Activated B cell treated with CpG ODN at 0.5 μM for 24 hours (primary cell): ENCODE measurements at regions of chr2 and their contacts with region 1.

Region 1: DNA sequence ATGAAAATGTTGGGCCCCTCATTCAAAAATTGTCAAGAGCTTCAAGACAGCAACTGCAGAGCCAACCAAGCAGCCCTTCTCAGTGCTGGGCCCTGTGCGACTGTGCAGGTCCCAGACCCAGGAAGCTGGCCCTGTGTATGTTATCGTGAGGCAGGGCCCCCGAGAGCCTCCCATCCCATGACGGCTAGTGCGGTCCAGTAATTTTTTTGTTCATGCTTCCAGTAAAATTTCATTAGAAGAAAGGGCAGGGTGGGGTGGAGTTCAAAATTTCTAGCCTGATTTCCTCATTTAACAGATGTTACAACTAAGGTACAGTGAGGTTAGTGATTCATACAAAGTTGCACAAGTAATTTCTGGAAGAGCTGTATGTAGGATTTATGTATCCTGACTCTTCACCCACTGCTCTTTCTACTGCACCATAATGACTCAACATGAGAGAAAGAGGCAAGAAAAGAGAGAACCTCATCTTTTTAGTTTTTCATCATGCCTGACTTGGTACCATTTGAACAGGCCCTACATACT is 105.5 kb downstream of the ZEB2 start:
- DNase-seq: no peak
- ATAC-seq: peak; percentile 71
- H3K4me3 Mint-ChIP-seq: no peak overlapping the region
- H3K27ac Mint-ChIP-seq: peak overlapping the region; percentile 36
- H3K4me1 Mint-ChIP-seq: peaks cover 21% of the 10 kb centered on the region
- H3K27me3 Mint-ChIP-seq: no peaks in the 10 kb centered on the region
- CTCF ChIP-seq: no peak

Region 2: DNA sequence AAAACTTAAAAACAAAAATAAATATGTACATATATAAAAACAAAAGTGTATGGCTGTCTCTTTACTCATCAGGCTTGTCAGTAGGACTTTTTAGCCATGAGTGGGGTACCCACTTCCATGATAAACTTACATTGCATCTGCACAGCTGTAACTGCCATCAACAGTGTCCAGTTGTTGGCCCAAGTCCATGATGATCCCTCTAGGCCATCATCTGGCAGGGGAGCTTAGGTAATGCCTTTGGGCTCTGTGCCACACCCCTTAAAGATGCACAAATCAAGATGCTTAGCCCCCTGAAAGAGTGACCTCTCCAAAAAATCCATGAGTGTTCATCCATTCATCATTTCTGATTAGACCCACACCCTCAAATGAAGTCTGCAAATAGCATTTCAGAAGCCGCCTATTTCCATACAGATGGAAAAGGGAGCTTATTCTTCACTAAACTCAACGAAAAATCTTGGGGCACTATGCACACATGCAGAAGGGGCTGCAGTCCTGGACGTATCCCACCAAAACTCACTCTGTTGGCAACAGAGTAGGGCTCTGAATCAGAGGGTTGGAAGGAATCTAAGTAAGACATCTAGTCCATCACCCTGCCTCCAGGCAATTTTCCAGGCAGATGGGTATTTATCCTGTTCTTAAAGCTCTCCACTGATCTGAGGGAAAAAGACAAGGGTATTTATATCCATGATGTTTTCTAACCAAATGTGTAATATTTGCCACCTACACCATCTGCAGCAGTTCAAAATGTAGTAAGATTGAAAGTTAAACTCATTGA is 585.4 kb before region 1 on chr2:
- CTCF ChIA-PET with region 1: no interaction called
- POLR2A ChIA-PET with region 1: no interaction called
- intact Hi-C with region 1: no loop called
- DNase-seq: no peak
- ATAC-seq: no peak
- H3K4me3 Mint-ChIP-seq: no peak overlapping the region
- H3K27ac Mint-ChIP-seq: no peak overlapping the region
- H3K4me1 Mint-ChIP-seq: no peaks in the 10 kb centered on the region
- H3K27me3 Mint-ChIP-seq: peaks cover 2% of the 10 kb centered on the region
- CTCF ChIP-seq: no peak

Region 3: GRCh38 chr2:144402251-144402650 is 12.1 kb before region 1 on chr2:
- CTCF ChIA-PET with region 1: no interaction called
- POLR2A ChIA-PET with region 1: interaction called, 3 read pairs
- intact Hi-C with region 1: loop called (anchors 1 kb)
- DNase-seq: no peak
- ATAC-seq: no peak
- H3K4me3 Mint-ChIP-seq: no peak overlapping the region
- H3K27ac Mint-ChIP-seq: peak overlapping the region; percentile 1
- H3K4me1 Mint-ChIP-seq: peaks cover 21% of the 10 kb centered on the region
- H3K27me3 Mint-ChIP-seq: no peaks in the 10 kb centered on the region
- CTCF ChIP-seq: no peak

Region 4: DNA sequence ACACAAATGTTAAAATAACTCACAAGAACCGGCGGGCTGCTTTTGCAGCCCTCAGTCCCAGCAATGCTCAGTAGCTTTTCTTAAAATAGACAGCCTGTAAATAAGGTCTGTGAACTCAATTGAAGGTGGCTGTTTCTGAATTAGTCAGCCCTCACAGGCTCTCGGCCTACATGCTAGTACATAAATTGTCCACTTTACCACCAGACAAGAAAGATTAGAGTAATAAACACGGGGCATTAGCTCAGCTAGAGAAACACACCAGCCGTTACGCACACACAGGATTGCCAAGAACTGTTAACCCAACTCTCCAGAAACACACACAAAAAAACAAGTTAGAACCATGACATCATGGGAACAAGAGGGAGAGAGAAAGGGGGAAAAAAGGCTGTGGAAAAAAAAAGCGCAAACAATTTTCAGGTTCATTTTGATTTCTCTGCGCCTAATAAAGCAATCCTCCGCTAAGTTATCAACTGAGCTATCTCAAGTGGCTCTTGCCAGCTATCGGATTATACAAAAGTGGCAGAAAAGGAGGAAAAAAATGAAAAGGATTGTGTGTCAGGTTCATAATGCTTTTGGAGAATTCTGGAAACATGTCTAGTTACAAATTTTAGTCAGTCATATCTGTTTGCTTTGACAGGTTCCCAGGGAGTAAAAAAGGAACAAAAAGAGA is 16.5 kb after region 1 on chr2:
- CTCF ChIA-PET with region 1: no interaction called
- POLR2A ChIA-PET with region 1: interaction called, 3 read pairs
- intact Hi-C with region 1: loop called (anchors 2 kb)
- DNase-seq: no peak
- ATAC-seq: peak; percentile 56
- H3K4me3 Mint-ChIP-seq: no peak overlapping the region
- H3K27ac Mint-ChIP-seq: no peak overlapping the region
- H3K4me1 Mint-ChIP-seq: peaks cover 44% of the 10 kb centered on the region
- H3K27me3 Mint-ChIP-seq: no peaks in the 10 kb centered on the region
- CTCF ChIP-seq: no peak

Region 5: DNA sequence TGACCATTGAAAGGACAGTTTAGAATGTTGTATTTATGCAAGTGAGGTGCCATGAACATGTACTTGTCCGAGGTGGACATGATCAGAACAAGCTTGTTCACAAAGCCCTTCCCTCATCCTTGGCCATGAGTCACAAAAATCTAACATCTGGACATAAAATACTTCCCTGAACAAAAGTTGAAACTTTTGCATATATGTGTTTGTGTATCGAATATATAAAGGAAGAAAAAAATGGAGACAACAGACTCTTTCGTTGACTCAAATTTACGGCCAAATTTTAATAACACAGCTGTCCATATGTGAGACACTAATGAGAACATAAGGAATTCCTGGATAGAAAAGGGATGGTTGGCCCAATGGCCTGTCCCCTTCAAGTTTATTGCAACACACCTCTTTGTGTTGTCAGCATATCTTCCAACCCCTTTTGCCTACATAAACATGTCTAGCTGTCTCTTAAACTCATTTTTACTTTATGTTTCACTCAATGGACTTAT is 125.0 kb after region 1 on chr2:
- CTCF ChIA-PET with region 1: no interaction called
- POLR2A ChIA-PET with region 1: no interaction called
- intact Hi-C with region 1: no loop called
- DNase-seq: no peak
- ATAC-seq: no peak
- H3K4me3 Mint-ChIP-seq: no peak overlapping the region
- H3K27ac Mint-ChIP-seq: no peak overlapping the region
- H3K4me1 Mint-ChIP-seq: peaks cover 5% of the 10 kb centered on the region
- H3K27me3 Mint-ChIP-seq: no peaks in the 10 kb centered on the region
- CTCF ChIP-seq: no peak

Region 6: DNA sequence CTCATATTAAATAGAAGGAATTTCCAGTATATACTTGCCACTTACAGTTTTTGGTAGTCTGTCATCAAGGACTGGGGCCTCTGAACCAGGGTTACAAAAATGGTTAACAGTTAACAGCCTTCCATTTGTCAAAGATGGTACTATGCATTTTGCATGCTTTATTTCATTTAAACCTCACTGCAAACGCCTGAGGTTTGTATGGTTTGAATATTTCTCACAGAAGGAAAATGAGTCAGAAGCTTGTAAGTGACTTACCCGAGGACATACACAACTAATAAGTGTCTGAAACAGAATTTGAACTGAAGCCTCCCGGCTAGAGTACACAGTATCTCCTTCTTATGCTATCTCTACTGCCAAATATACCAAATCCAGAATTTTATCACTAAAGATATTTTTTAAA is 1836.9 kb after region 1 on chr2:
- CTCF ChIA-PET with region 1: no interaction called
- POLR2A ChIA-PET with region 1: no interaction called
- intact Hi-C with region 1: no loop called
- DNase-seq: no peak
- ATAC-seq: no peak
- H3K4me3 Mint-ChIP-seq: no peak overlapping the region
- H3K27ac Mint-ChIP-seq: no peak overlapping the region
- H3K4me1 Mint-ChIP-seq: peaks cover 2% of the 10 kb centered on the region
- H3K27me3 Mint-ChIP-seq: no peaks in the 10 kb centered on the region
- CTCF ChIP-seq: no peak